ENCODE measurements at regions of chr5 and their contacts with region 1.

Region 1: GRCh38 chr5:66814146-66814991 is 218.2 kb downstream of the MAST4 start:
- DNase-seq: no peak
- ATAC-seq: peak in 2 of 4 donors; percentile 24 to 26
- H3K4me3 ChIP-seq: no peak overlapping the region
- H3K27ac ChIP-seq: no peak overlapping the region
- H3K4me1 ChIP-seq: peaks cover 0 to 23% (median 4%) of the 10 kb centered on the region in 12 donors
- H3K27me3 ChIP-seq: no peaks in the 10 kb centered on the region
- CTCF ChIP-seq: peak; percentile 54 to 82 (median 74)
- POLR2A ChIP-seq: no peak

Region 2: DNA sequence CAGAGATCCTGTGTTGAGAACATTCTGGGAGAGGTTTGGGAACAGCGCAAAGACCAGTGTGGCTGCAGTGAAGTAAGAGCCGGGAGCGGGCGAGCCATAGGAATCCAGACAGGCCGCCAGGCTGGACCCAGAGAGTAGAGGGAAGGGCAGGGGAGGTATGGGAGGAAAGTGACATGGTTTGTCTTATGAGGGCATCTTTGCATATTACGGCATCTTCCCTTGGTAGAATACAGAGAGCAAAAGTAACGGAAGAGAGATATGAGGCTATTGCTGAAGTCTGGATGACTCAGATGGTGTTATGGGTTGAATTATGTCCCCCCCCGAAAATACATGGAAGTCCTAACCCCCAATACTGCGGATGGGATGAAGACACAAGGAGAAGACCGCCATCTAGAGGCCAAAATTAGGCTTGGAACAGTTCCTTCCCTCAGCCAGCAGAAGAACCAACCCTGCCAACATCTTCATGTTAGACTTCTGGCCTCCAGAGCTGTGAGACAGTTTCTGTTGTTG is 50.0 kb after region 1 on chr5:
- intact Hi-C with region 1: loop called in 9 of 10 experiments (anchors 1 to 10 kb)
- DNase-seq: peak in 1 of 5 donors; percentile 25
- ATAC-seq: peak in 3 of 4 donors; percentile 25 to 66 (median 48)
- H3K4me3 ChIP-seq: no peak overlapping the region
- H3K27ac ChIP-seq: no peak overlapping the region
- H3K4me1 ChIP-seq: peaks cover 0 to 55% (median 11%) of the 10 kb centered on the region in 12 donors
- H3K27me3 ChIP-seq: no peaks in the 10 kb centered on the region
- CTCF ChIP-seq: peak; percentile 24 to 64 (median 45)
- POLR2A ChIP-seq: no peak

Region 3: DNA sequence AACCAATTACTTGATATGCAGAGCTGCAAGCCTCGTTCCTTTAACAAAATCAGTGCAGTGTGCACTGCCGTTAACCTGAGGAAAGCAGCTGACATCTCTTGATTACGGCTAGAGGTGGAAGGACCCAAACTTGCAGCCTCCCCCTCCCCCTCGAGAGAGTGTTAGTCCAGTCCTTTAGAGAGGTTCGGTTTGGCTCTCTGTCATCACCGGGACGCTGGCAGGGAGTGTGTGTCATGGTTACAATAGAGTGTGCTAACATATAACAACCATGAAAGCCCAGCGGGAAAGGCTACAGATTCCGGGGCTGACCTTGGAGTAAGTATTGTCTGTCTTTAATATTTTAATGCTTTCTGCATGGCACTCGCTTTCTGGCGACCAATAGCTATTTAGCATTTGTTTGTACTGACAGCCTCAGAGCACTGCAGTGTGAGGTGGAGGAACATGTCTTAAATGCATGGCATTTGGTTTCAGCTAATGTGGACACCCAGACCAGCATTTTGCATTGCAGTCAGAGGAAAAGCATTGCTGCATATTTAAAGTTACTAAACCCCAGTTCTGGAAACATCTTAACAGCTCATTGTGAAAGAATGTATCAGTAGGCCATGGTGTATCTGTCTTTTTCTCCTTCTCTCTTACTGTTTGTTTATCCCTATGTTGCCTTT is 144.7 kb after region 1 on chr5:
- intact Hi-C with region 1: loop called in 2 of 10 experiments (anchors 10 kb)
- DNase-seq: peak in 4 of 5 donors; percentile 31 to 64 (median 38)
- ATAC-seq: peak; percentile 63 to 75 (median 67)
- H3K4me3 ChIP-seq: peak overlapping the region; percentile 4 to 65 (median 48)
- H3K27ac ChIP-seq: peak overlapping the region; percentile 51 to 73 (median 66)
- H3K4me1 ChIP-seq: peaks cover 0 to 50% (median 14%) of the 10 kb centered on the region in 12 donors
- H3K27me3 ChIP-seq: no peaks in the 10 kb centered on the region
- CTCF ChIP-seq: no peak
- POLR2A ChIP-seq: no peak

Region 4: DNA sequence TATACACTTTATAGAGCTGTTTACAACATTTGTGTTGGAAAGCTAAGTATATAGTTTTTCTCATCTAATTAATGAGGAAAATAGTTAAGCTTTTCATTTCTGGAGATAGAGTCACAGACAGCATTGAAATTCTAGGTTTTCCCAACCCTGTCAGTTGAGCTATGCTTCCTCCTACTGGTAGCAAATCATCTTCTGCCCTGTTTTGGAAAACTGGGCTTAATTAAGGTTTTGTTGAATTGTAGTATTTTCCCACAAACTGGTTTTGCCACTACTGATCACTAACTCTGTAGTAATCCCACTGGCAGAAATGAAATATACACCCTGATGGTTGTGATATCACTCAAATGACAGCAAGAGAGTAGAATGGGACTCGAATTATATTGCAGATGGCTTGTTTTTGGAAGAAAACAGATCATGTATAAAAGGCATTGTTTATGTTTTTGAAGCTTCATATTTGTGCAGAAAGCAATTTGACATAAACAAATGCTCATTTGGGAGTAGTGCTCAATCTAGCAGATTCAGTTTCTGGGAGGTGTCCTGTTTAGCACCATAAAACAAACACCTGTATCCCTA is 335.7 kb after region 1 on chr5:
- intact Hi-C with region 1: loop called in 6 of 10 experiments (anchors 5 to 10 kb)
- DNase-seq: no peak
- ATAC-seq: no peak
- H3K4me3 ChIP-seq: peak overlapping the region in 5 of 12 donors; percentile 15 to 45 (median 29)
- H3K27ac ChIP-seq: peak overlapping the region in 2 of 12 donors; percentile 21 to 28
- H3K4me1 ChIP-seq: peaks cover 0 to 17% (median 6%) of the 10 kb centered on the region in 12 donors
- H3K27me3 ChIP-seq: no peaks in the 10 kb centered on the region
- CTCF ChIP-seq: peak in 11 of 12 donors; percentile 15 to 66 (median 46)
- POLR2A ChIP-seq: no peak

Region 5: GRCh38 chr5:67156976-67157583 is 342.7 kb after region 1 on chr5:
- intact Hi-C with region 1: loop called in 6 of 10 experiments (anchors 5 to 10 kb)
- DNase-seq: no peak
- ATAC-seq: no peak
- H3K4me3 ChIP-seq: no peak overlapping the region
- H3K27ac ChIP-seq: no peak overlapping the region
- H3K4me1 ChIP-seq: peaks cover 0 to 23% (median 8%) of the 10 kb centered on the region in 12 donors
- H3K27me3 ChIP-seq: no peaks in the 10 kb centered on the region
- CTCF ChIP-seq: peak; percentile 55 to 87 (median 71)
- POLR2A ChIP-seq: no peak

Measured in heart left ventricle (tissue), 16 donors.